B cell (primary cell): ENCODE measurements at regions of chr14 and their contacts with region 1.

Region 1: GRCh38 chr14:67487937-67488893 is at the start of gene TMEM229B:
- DNase-seq: peak; percentile 94
- ATAC-seq: peak; percentile 83
- H3K4me3 ChIP-seq: peak within 1 kb of the TSS; percentile 24 to 66 (median 55)
- H3K4me3 Mint-ChIP-seq: peak within 1 kb of the TSS; percentile 84
- H3K27ac ChIP-seq: peak within 1 kb of the TSS; percentile 97 to 98
- H3K27ac Mint-ChIP-seq: peak within 1 kb of the TSS; percentile 96
- H3K4me1 ChIP-seq: peaks cover 70 to 77% of the 10 kb centered on the region in 2 donors
- H3K4me1 Mint-ChIP-seq: peaks cover 83% of the 10 kb centered on the region
- H3K27me3 ChIP-seq: no peaks in the 10 kb centered on the region
- H3K27me3 Mint-ChIP-seq: no peaks in the 10 kb centered on the region
- CTCF ChIP-seq: peak; percentile 25
- total RNA-seq, gene TMEM229B: 4.2 and 6.9 TPM in 2 replicates

Region 2: DNA sequence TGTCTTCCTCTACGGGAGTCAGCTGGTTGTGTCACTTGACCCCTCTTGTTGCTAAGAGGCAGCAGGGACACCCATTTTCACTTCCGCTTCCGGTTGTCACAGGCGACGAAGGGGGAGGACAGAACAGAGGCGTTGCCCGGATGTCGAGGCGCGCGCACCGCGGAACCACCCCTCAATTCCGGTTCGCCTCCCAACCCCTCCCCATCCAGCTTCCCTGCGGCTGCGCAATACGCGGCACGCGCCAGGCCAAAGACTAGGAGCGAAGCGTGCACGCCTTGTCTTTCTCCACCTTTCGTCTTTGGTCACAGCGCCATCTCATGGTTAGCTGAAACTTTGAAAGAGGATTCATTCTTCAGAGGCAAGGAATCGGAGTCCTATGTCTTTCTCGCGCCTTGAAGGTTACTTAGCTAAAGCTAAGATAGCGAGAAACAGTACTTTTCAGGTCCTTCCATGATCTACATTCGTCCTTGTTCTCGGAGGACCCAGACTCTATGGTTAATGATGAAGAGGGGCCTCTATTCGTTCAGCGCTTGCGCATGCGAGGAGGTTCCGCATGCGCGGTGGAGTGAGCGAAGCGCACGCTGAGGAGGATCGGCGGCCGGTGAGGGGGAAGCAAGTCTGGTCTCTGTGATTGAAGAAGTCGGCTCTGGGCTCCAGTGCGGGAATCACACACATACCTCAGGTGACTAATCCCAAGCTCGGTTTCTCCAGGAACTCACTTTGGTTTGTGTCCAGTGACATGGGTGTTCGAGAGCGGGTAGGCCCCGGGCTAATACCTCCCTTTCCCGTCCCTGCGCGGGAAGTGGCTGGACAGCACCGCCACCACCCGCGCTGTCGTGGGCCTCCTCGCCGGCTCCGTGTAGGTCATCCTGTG is 128.2 kb before region 1 on chr14 and contains the starts of genes ATP6V1D and EIF2S1:
- CTCF ChIA-PET with region 1: interaction called, 3 read pairs
- POLR2A ChIA-PET with region 1: no interaction called
- intact Hi-C with region 1: loop called (anchors 1 kb)
- DNase-seq: peak; percentile 100
- ATAC-seq: peak; percentile 90
- H3K4me3 ChIP-seq: peak within 1 kb of the TSS; percentile 79 to 97 (median 93)
- H3K4me3 Mint-ChIP-seq: peak within 1 kb of the TSS; percentile 100
- H3K27ac ChIP-seq: peak within 1 kb of the TSS; percentile 92 to 95
- H3K27ac Mint-ChIP-seq: peak within 1 kb of the TSS; percentile 100
- H3K4me1 ChIP-seq: peaks cover 26% of the 10 kb centered on the region in 2 donors
- H3K4me1 Mint-ChIP-seq: peaks cover 50% of the 10 kb centered on the region
- H3K27me3 ChIP-seq: no peaks in the 10 kb centered on the region
- H3K27me3 Mint-ChIP-seq: no peaks in the 10 kb centered on the region
- CTCF ChIP-seq: peak; percentile 100
- total RNA-seq, gene ATP6V1D: 35.3 and 35.6 TPM in 2 replicates
- total RNA-seq, gene EIF2S1: 39.3 and 39.9 TPM in 2 replicates

Region 3: GRCh38 chr14:67446120-67447032 is 41.8 kb before region 1 on chr14:
- CTCF ChIA-PET with region 1: no interaction called
- POLR2A ChIA-PET with region 1: no interaction called
- intact Hi-C with region 1: no loop called
- DNase-seq: no peak
- ATAC-seq: no peak
- H3K4me3 ChIP-seq: no peak overlapping the region
- H3K4me3 Mint-ChIP-seq: no peak overlapping the region
- H3K27ac ChIP-seq: no peak overlapping the region
- H3K27ac Mint-ChIP-seq: no peak overlapping the region
- H3K4me1 ChIP-seq: no peaks in the 10 kb centered on the region
- H3K4me1 Mint-ChIP-seq: no peaks in the 10 kb centered on the region
- H3K27me3 ChIP-seq: no peaks in the 10 kb centered on the region
- H3K27me3 Mint-ChIP-seq: peaks cover 10% of the 10 kb centered on the region
- CTCF ChIP-seq: no peak

Region 4: GRCh38 chr14:67526676-67527459 is 38.7 kb after region 1 on chr14:
- CTCF ChIA-PET with region 1: interaction called, 28 read pairs
- POLR2A ChIA-PET with region 1: no interaction called
- intact Hi-C with region 1: loop called (anchors 1 kb)
- DNase-seq: peak; percentile 56
- ATAC-seq: peak; percentile 78
- H3K4me3 ChIP-seq: no peak overlapping the region
- H3K4me3 Mint-ChIP-seq: no peak overlapping the region
- H3K27ac ChIP-seq: no peak overlapping the region
- H3K27ac Mint-ChIP-seq: peak overlapping the region; percentile 21
- H3K4me1 ChIP-seq: peaks cover 0 to 4% of the 10 kb centered on the region in 2 donors
- H3K4me1 Mint-ChIP-seq: peaks cover 2% of the 10 kb centered on the region
- H3K27me3 ChIP-seq: peaks cover 0 to 42% (median 18%) of the 10 kb centered on the region in 4 experiments
- H3K27me3 Mint-ChIP-seq: peaks cover 56% of the 10 kb centered on the region
- CTCF ChIP-seq: peak; percentile 60

Region 5: DNA sequence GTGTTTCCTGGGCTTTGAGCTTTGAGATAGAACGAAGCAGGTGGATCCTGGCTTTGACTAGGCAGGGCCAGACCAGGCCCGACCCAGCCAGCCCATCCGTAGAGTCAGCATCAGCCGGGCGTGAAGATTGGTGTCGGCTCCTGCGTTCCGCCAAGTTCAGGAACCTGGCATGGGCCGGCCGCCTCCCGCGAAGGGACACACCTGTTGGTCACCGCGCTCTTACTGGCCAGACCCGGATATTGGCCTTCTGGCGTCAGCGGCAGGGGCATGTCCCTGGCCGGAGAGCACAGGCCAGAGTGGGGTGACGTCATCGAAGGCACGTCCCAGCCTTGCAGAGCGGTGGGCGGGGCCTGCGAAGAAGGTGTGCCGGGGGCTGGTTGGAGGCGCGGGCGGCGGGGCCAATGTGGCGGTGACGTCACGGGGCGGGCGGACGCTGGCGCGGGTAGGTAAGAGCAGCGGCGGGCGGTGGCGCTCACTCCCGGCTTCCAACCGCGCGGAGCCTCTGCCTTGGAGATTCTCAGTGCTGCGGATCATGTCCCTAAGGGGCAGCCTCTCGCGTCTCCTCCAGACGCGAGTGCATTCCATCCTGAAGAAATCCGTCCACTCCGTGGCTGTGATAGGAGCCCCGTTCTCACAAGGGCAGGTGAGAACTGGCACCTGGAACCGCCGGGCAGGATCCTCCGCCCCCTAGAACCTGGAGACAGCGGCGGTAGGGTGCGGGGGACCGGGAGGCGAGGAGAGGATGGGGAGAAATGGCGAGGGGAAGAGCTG is 131.4 kb after region 1 on chr14 and contains the start of gene ARG2:
- CTCF ChIA-PET with region 1: no interaction called
- POLR2A ChIA-PET with region 1: no interaction called
- intact Hi-C with region 1: loop called (anchors 1 kb)
- DNase-seq: peak; percentile 98
- ATAC-seq: peak; percentile 94
- H3K4me3 ChIP-seq: peak within 1 kb of the TSS; percentile 57 to 94 (median 81)
- H3K4me3 Mint-ChIP-seq: peak within 1 kb of the TSS; percentile 92
- H3K27ac ChIP-seq: peak within 1 kb of the TSS; percentile 76 to 78
- H3K27ac Mint-ChIP-seq: peak within 1 kb of the TSS; percentile 94
- H3K4me1 ChIP-seq: peaks cover 12 to 18% of the 10 kb centered on the region in 2 donors
- H3K4me1 Mint-ChIP-seq: peaks cover 23% of the 10 kb centered on the region
- H3K27me3 ChIP-seq: peaks cover 0 to 4% (median 0%) of the 10 kb centered on the region in 4 experiments
- H3K27me3 Mint-ChIP-seq: no peaks in the 10 kb centered on the region
- CTCF ChIP-seq: no peak
- total RNA-seq, gene ARG2: 1.8 and 2.0 TPM in 2 replicates

Region 6: GRCh38 chr14:67650694-67651093 is 162.5 kb after region 1 on chr14:
- CTCF ChIA-PET with region 1: no interaction called
- POLR2A ChIA-PET with region 1: no interaction called
- intact Hi-C with region 1: no loop called
- DNase-seq: no peak
- ATAC-seq: no peak
- H3K4me3 ChIP-seq: no peak overlapping the region
- H3K4me3 Mint-ChIP-seq: no peak overlapping the region
- H3K27ac ChIP-seq: no peak overlapping the region
- H3K27ac Mint-ChIP-seq: no peak overlapping the region
- H3K4me1 ChIP-seq: no peaks in the 10 kb centered on the region
- H3K4me1 Mint-ChIP-seq: no peaks in the 10 kb centered on the region
- H3K27me3 ChIP-seq: no peaks in the 10 kb centered on the region
- H3K27me3 Mint-ChIP-seq: no peaks in the 10 kb centered on the region
- CTCF ChIP-seq: no peak

Region 7: GRCh38 chr14:67722293-67722692 is 234.1 kb after region 1 on chr14:
- CTCF ChIA-PET with region 1: no interaction called
- POLR2A ChIA-PET with region 1: no interaction called
- intact Hi-C with region 1: no loop called
- DNase-seq: no peak
- ATAC-seq: no peak
- H3K4me3 ChIP-seq: no peak overlapping the region
- H3K4me3 Mint-ChIP-seq: no peak overlapping the region
- H3K27ac ChIP-seq: no peak overlapping the region
- H3K27ac Mint-ChIP-seq: no peak overlapping the region
- H3K4me1 ChIP-seq: no peaks in the 10 kb centered on the region
- H3K4me1 Mint-ChIP-seq: peaks cover 3% of the 10 kb centered on the region
- H3K27me3 ChIP-seq: peaks cover 0 to 26% (median 14%) of the 10 kb centered on the region in 4 experiments
- H3K27me3 Mint-ChIP-seq: peaks cover 46% of the 10 kb centered on the region
- CTCF ChIP-seq: no peak

Region 8: DNA sequence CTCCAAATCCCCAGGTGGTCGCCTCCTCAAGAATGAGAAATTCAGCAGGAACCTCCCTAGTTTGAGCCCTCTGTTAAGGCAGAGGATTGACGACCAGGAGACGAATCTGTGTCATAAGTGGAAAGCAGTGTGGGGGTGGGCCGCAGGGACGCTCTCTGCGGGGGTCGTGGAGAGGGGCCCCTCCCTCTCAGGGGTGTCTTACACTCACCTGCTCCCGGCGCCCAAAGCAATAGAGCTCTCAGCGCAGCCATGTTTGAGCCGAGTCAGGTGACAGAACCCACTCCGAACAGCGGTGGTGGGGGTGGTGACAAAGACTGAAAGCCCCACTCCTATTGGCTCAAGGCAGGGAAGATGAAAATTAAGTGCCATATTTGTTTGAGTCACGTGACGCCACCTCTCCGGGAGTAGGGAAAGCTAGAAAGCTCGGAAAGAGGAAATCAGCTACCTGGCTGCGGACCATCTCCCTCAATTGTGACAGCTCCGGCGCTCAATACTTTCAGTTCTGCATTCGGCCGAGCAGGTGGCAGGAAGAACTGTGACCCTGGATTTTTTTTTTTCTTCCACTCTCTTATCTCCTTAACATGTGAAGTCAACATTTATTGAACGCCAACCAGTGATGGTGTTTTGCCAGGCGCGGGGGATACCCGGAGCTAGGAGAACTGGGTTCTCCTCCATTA is 328.2 kb after region 1 on chr14 and contains the start of gene ZFYVE26:
- CTCF ChIA-PET with region 1: no interaction called
- POLR2A ChIA-PET with region 1: no interaction called
- intact Hi-C with region 1: loop called (anchors 1 kb)
- DNase-seq: peak; percentile 97
- ATAC-seq: peak; percentile 84
- H3K4me3 ChIP-seq: peak within 1 kb of the TSS; percentile 56 to 89 (median 77)
- H3K4me3 Mint-ChIP-seq: peak within 1 kb of the TSS; percentile 95
- H3K27ac ChIP-seq: peak within 1 kb of the TSS; percentile 79 to 84
- H3K27ac Mint-ChIP-seq: peak within 1 kb of the TSS; percentile 96
- H3K4me1 ChIP-seq: peaks cover 31 to 34% of the 10 kb centered on the region in 2 donors
- H3K4me1 Mint-ChIP-seq: peaks cover 55% of the 10 kb centered on the region
- H3K27me3 ChIP-seq: no peaks in the 10 kb centered on the region
- H3K27me3 Mint-ChIP-seq: no peaks in the 10 kb centered on the region
- CTCF ChIP-seq: no peak
- total RNA-seq, gene ZFYVE26: 46.3 and 53.9 TPM in 2 replicates